ENCODE measurements at regions of chr15 and their contacts with region 1.

Region 1: DNA sequence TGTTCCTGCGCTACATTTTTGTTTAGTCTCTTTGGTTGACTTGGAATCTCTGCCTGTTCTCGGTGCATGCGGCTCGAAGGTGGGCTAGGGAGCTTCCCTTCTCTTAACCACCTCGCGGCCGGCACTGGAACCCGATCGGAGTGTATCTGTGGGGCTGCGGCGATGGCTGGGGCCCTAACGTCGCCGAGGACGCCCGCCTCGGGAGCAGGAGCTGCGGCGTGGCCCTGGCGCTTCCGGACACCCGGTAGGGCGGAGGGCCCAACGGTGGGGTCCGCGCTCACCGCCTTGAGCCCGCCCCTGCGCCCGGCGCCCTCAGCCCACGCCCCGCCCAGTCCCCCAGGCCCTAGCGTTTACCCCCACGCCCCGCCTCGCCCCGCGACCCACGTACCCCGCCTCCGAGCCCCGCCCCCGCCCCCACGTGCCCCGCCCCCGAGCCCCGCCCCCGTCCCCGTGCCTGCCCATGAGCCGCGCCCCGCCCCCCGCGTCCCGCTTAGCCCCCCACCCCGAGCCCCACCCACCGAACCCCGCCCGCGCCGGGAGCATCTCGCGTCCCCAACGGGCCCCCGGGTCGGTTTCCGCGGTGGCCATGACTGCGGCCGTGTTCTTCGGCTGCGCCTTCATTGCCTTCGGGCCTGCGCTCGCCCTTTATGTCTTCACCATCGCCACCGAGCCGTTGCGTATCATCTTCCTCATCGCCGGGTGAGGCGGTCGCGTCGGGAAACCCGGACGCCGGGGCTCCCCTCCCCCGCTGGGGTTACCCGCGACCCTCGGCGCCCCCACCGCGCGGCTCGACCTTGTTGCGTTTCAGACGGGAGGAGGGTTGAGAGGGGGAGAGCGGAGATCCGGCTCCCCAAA is at the start of gene APH1B:
- DNase-seq: peak; percentile 31
- ATAC-seq: peak; percentile 92
- H3K4me3 ChIP-seq: peak within 1 kb of the TSS; percentile 50 to 69 (median 66)
- H3K27ac ChIP-seq: no peak within 1 kb of the TSS
- H3K4me1 ChIP-seq: peaks cover 17% of the 10 kb centered on the region
- H3K27me3 ChIP-seq: no peaks in the 10 kb centered on the region; a peak in 1 of 5 replicates
- CTCF ChIP-seq: no peak
- EP300 ChIP-seq: no peak
- POLR2A ChIP-seq: peak in 1 of 2 experiments; percentile 70; a peak in 2 of 4 replicates
- RAD21 ChIP-seq: no peak
- total RNA-seq, gene APH1B: 0.67 and 1.00 TPM in 2 replicates

Region 2: GRCh38 chr15:63188926-63189871 is 88.1 kb before region 1 on chr15 and contains the start of gene RAB8B:
- CTCF ChIA-PET with region 1: no interaction called
- POLR2A ChIA-PET with region 1: interaction called, 3 read pairs
- in situ Hi-C with region 1: no loop called
- intact Hi-C with region 1: loop called (anchors 5 kb)
- DNase-seq: peak; percentile 89
- ATAC-seq: peak; percentile 98
- H3K4me3 ChIP-seq: peak within 1 kb of the TSS; percentile 82 to 93 (median 85)
- H3K27ac ChIP-seq: no peak within 1 kb of the TSS
- H3K4me1 ChIP-seq: peaks cover 77% of the 10 kb centered on the region
- H3K27me3 ChIP-seq: no peaks in the 10 kb centered on the region; a peak in 1 of 5 replicates
- CTCF ChIP-seq: 0 out of 2 replicates have a peak, but pooled peaks have one; percentile 26
- EP300 ChIP-seq: no peak
- POLR2A ChIP-seq: peak; percentile 46 to 77; a peak in 3 of 4 replicates
- RAD21 ChIP-seq: no peak
- total RNA-seq, gene RAB8B: 14.2 and 20.4 TPM in 2 replicates

Region 3: GRCh38 chr15:63291507-63291906 is 14.2 kb after region 1 on chr15:
- CTCF ChIA-PET with region 1: no interaction called
- POLR2A ChIA-PET with region 1: no interaction called
- in situ Hi-C with region 1: no loop called
- intact Hi-C with region 1: no loop called
- DNase-seq: no peak
- ATAC-seq: no peak
- H3K4me3 ChIP-seq: no peak overlapping the region
- H3K27ac ChIP-seq: no peak overlapping the region
- H3K4me1 ChIP-seq: peaks cover 23% of the 10 kb centered on the region
- H3K27me3 ChIP-seq: no peaks in the 10 kb centered on the region
- CTCF ChIP-seq: no peak
- EP300 ChIP-seq: no peak
- POLR2A ChIP-seq: no peak
- RAD21 ChIP-seq: no peak

Region 4: DNA sequence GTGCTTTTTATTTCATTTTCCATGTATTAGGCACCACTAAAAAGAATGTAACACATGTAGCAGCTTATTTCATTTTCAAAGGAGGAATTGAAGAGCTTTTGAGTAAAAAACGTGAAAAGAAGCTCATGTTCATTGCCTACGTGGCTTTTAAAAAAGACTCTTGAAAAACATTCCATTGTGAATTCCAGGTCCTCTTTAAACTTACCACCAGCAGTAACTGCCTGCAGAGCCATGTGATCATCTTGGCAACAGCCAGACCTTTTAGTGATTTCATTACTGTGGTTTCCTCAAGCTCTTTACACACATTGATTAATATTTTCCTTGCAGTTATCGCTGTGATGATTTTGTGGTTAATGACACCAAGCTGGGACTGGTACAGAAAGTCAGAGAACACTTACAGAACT is 276.1 kb after region 1 on chr15:
- CTCF ChIA-PET with region 1: no interaction called
- POLR2A ChIA-PET with region 1: no interaction called
- in situ Hi-C with region 1: loop called (anchors 25 kb)
- intact Hi-C with region 1: no loop called
- DNase-seq: no peak
- ATAC-seq: no peak
- H3K4me3 ChIP-seq: no peak overlapping the region
- H3K27ac ChIP-seq: no peak overlapping the region
- H3K4me1 ChIP-seq: no peaks in the 10 kb centered on the region
- H3K27me3 ChIP-seq: no peaks in the 10 kb centered on the region
- CTCF ChIP-seq: no peak
- EP300 ChIP-seq: no peak
- POLR2A ChIP-seq: no peak
- RAD21 ChIP-seq: no peak